ENCODE measurements at regions of chr2 and their contacts with region 1.

Region 1: DNA sequence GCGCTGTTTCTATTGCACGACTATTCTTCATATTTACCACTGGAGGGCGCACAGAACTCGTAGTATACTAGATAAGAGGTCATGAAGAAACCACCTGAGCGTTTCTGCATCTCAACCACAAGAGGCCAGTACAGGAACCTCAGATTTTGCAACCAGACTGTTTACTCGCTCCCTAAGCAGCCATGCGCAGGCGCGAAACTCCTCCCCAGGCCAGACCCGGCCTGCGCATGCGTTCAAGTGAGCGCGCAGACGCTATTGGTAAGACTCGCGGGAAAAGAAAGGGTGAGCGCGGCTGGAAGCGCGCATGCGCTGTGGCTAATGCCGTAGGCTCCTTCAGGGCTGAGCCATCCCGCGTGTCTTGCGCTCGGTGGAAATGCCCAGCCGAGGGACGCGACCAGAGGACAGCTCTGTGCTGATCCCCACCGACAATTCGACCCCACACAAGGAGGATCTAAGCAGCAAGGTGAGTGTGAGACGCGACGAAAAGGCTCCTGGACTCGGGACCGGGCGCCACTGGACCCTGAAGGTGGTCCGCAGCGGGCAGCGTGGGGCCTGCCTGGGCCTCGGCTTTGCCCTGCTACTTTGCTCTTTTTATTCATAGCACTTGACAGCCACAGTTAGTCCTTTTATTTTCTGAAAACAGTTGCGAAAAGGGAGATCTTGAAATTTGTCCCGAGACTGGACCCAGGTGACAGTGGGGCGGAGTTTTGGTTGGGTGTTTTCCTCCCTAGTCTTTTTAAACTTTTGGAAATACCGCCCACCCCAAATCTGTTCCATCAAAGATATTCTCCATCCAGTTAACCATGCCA is at the start of gene ASNSD1:
- DNase-seq: peak; percentile 97 to 100 (median 99)
- ATAC-seq: peak; percentile 97
- H3K4me3 ChIP-seq: peak within 1 kb of the TSS; percentile 86
- H3K4me3 Mint-ChIP-seq: no peak within 1 kb of the TSS
- H3K27ac ChIP-seq: peak within 1 kb of the TSS; percentile 95
- H3K27ac Mint-ChIP-seq: peak within 1 kb of the TSS in 1 of 9 donors; percentile 91
- H3K4me1 ChIP-seq: peaks cover 32 to 38% of the 10 kb centered on the region in 2 donors
- H3K4me1 Mint-ChIP-seq: peaks cover 32 to 62% (median 43%) of the 10 kb centered on the region in 7 donors
- H3K27me3 ChIP-seq: no peaks in the 10 kb centered on the region
- H3K27me3 Mint-ChIP-seq: no peaks in the 10 kb centered on the region
- total RNA-seq, gene ASNSD1: 24.0 to 48.9 (median 40.7) TPM

Region 2: GRCh38 chr2:189115126-189115525 is 546.2 kb before region 1 on chr2:
- CTCF ChIA-PET with region 1: no interaction called
- POLR2A ChIA-PET with region 1: no interaction called
- intact Hi-C with region 1: no loop called
- DNase-seq: no peak
- ATAC-seq: no peak
- H3K4me3 ChIP-seq: no peak overlapping the region
- H3K4me3 Mint-ChIP-seq: no peak overlapping the region
- H3K27ac ChIP-seq: no peak overlapping the region
- H3K27ac Mint-ChIP-seq: no peak overlapping the region
- H3K4me1 ChIP-seq: no peaks in the 10 kb centered on the region
- H3K4me1 Mint-ChIP-seq: peaks cover 0 to 2% (median 0%) of the 10 kb centered on the region in 7 donors
- H3K27me3 ChIP-seq: no peaks in the 10 kb centered on the region
- H3K27me3 Mint-ChIP-seq: peaks cover 0 to 4% (median 0%) of the 10 kb centered on the region in 5 donors

Region 3: DNA sequence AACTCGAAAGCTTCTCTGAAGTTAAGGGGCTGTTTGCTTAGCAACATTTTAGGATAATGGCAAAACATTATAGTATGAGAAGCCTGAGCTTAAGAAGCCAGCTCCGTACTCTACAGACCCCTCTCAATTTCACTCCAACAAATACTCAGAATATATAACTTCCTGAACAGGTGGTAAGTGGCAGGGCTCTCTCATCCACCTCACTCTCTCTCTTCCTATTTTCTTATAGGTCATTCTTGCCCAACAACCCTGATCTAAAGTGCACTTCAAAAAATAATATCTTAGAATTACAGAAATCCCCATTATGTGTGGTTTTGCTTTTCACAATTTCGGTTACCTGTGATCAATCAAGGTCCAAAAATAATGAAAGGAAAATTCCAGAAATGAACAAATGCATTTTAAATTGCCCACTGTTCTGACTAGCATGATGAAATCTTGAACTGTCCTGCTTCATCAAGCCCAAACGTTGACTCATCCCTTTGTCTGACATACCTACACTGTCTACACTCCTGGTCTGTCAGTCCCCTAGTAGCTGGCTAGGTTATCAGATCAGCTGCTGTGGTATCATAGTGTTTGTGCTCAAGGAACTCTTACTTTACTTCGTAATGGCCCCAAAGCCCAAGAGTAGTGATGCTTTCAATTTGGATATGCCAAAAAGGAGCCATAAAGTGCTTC is 358.9 kb before region 1 on chr2:
- CTCF ChIA-PET with region 1: no interaction called
- POLR2A ChIA-PET with region 1: no interaction called
- intact Hi-C with region 1: loop called in 1 of 2 experiments (anchors 5 kb)
- DNase-seq: no peak
- ATAC-seq: no peak
- H3K4me3 ChIP-seq: no peak overlapping the region
- H3K4me3 Mint-ChIP-seq: peak overlapping the region in 8 of 10 donors; percentile 4 to 74 (median 60)
- H3K27ac ChIP-seq: no peak overlapping the region
- H3K27ac Mint-ChIP-seq: peak overlapping the region in 8 of 9 donors; percentile 25 to 95 (median 70)
- H3K4me1 ChIP-seq: peaks cover 56 to 88% of the 10 kb centered on the region in 2 donors
- H3K4me1 Mint-ChIP-seq: peaks cover 57 to 96% (median 91%) of the 10 kb centered on the region in 7 donors
- H3K27me3 ChIP-seq: no peaks in the 10 kb centered on the region
- H3K27me3 Mint-ChIP-seq: no peaks in the 10 kb centered on the region

Region 4: GRCh38 chr2:189674374-189675112 is 13.2 kb after region 1 on chr2 and contains the start of gene ANKAR:
- CTCF ChIA-PET with region 1: interaction called, 47 read pairs
- POLR2A ChIA-PET with region 1: interaction called, 61 read pairs
- intact Hi-C with region 1: loop called (anchors 1 kb)
- DNase-seq: peak; percentile 71 to 88 (median 84)
- ATAC-seq: peak; percentile 98
- H3K4me3 ChIP-seq: peak within 1 kb of the TSS; percentile 62
- H3K4me3 Mint-ChIP-seq: peak within 1 kb of the TSS; percentile 88 to 96 (median 95)
- H3K27ac ChIP-seq: peak within 1 kb of the TSS; percentile 86
- H3K27ac Mint-ChIP-seq: peak within 1 kb of the TSS; percentile 96 to 99 (median 97)
- H3K4me1 ChIP-seq: peaks cover 9 to 12% of the 10 kb centered on the region in 2 donors
- H3K4me1 Mint-ChIP-seq: peaks cover 17 to 49% (median 40%) of the 10 kb centered on the region in 7 donors
- H3K27me3 ChIP-seq: no peaks in the 10 kb centered on the region
- H3K27me3 Mint-ChIP-seq: no peaks in the 10 kb centered on the region
- total RNA-seq, gene ANKAR: 4.3 to 17.9 (median 10.3) TPM

Region 5: DNA sequence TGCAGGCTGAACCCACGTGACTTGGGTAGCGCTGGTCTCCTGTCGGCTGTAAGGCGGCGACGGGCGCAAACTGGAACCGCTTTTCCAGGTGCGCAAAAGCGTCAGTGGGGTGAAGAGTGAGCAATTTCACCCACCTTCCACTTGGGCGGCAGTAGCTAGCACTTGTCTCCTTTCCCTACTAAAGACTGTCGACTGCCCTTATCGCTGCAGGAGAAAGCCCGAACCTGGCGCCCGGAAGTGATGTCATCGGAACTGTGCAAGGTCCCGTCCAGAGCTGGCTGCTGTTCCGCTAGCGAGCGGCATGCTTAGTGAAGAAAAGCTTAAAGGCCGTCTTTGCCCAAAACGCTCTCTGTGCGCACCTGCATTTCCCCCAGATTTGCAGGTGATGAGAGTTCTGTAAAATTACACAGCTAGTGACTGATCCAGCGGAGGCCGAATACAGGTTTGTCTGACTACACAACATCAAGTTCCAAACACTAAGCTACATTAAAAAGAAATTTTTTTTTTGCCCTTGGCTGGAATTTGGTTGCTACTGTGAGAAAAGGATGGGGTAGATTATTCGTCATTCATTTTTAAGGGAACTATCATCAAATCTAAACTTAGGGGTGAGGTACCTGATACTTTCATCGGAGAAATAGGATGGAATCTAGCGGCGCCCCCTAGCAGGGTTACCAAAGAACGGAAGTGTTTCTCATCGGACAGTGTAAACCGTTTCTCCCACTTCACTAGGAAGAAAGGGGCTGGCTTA is 101.4 kb after region 1 on chr2 and contains the start of gene OSGEPL1:
- CTCF ChIA-PET with region 1: interaction called, 8 read pairs
- POLR2A ChIA-PET with region 1: interaction called, 15 read pairs
- intact Hi-C with region 1: loop called (anchors 1 kb)
- DNase-seq: peak; percentile 72 to 95 (median 88)
- ATAC-seq: peak; percentile 95
- H3K4me3 ChIP-seq: peak within 1 kb of the TSS; percentile 88
- H3K4me3 Mint-ChIP-seq: peak within 1 kb of the TSS; percentile 88 to 98 (median 94)
- H3K27ac ChIP-seq: peak within 1 kb of the TSS; percentile 89
- H3K27ac Mint-ChIP-seq: peak within 1 kb of the TSS; percentile 94 to 98 (median 96)
- H3K4me1 ChIP-seq: peaks cover 6 to 10% of the 10 kb centered on the region in 2 donors
- H3K4me1 Mint-ChIP-seq: peaks cover 4 to 18% (median 9%) of the 10 kb centered on the region in 7 donors
- H3K27me3 ChIP-seq: no peaks in the 10 kb centered on the region
- H3K27me3 Mint-ChIP-seq: no peaks in the 10 kb centered on the region
- total RNA-seq, gene OSGEPL1: 6.8 to 24.2 (median 7.2) TPM

Region 6: GRCh38 chr2:190069936-190070696 is 408.8 kb after region 1 on chr2:
- CTCF ChIA-PET with region 1: interaction called, 3 read pairs
- POLR2A ChIA-PET with region 1: no interaction called
- intact Hi-C with region 1: loop called (anchors 1 kb)
- DNase-seq: peak in 6 of 9 donors; percentile 20 to 50 (median 32)
- ATAC-seq: peak; percentile 64
- H3K4me3 ChIP-seq: no peak overlapping the region
- H3K4me3 Mint-ChIP-seq: no peak overlapping the region
- H3K27ac ChIP-seq: no peak overlapping the region
- H3K27ac Mint-ChIP-seq: no peak overlapping the region
- H3K4me1 ChIP-seq: no peaks in the 10 kb centered on the region
- H3K4me1 Mint-ChIP-seq: no peaks in the 10 kb centered on the region
- H3K27me3 ChIP-seq: no peaks in the 10 kb centered on the region
- H3K27me3 Mint-ChIP-seq: peaks cover 0 to 8% (median 0%) of the 10 kb centered on the region in 5 donors

Region 7: GRCh38 chr2:190376591-190377245 is 715.4 kb after region 1 on chr2:
- CTCF ChIA-PET with region 1: no interaction called
- POLR2A ChIA-PET with region 1: no interaction called
- intact Hi-C with region 1: loop called (anchors 1 to 2 kb)
- DNase-seq: no peak
- ATAC-seq: no peak
- H3K4me3 ChIP-seq: no peak overlapping the region
- H3K4me3 Mint-ChIP-seq: no peak overlapping the region
- H3K27ac ChIP-seq: no peak overlapping the region
- H3K27ac Mint-ChIP-seq: no peak overlapping the region
- H3K4me1 ChIP-seq: no peaks in the 10 kb centered on the region
- H3K4me1 Mint-ChIP-seq: peaks cover 0 to 5% (median 0%) of the 10 kb centered on the region in 7 donors
- H3K27me3 ChIP-seq: no peaks in the 10 kb centered on the region
- H3K27me3 Mint-ChIP-seq: peaks cover 0 to 3% (median 0%) of the 10 kb centered on the region in 5 donors

Region 8: GRCh38 chr2:190679813-190680591 is 1018.6 kb after region 1 on chr2:
- CTCF ChIA-PET with region 1: no interaction called
- POLR2A ChIA-PET with region 1: no interaction called
- intact Hi-C with region 1: loop called in 1 of 2 experiments (anchors 1 kb)
- DNase-seq: peak; percentile 27 to 59 (median 46)
- ATAC-seq: peak; percentile 92
- H3K4me3 ChIP-seq: no peak overlapping the region
- H3K4me3 Mint-ChIP-seq: peak overlapping the region in 2 of 10 donors; percentile 8
- H3K27ac ChIP-seq: no peak overlapping the region
- H3K27ac Mint-ChIP-seq: peak overlapping the region in 7 of 9 donors; percentile 7 to 74 (median 52)
- H3K4me1 ChIP-seq: peaks cover 5 to 10% of the 10 kb centered on the region in 2 donors
- H3K4me1 Mint-ChIP-seq: peaks cover 17 to 49% (median 41%) of the 10 kb centered on the region in 7 donors
- H3K27me3 ChIP-seq: no peaks in the 10 kb centered on the region
- H3K27me3 Mint-ChIP-seq: no peaks in the 10 kb centered on the region